Esophagus squamous epithelium (tissue), 5 donors: ENCODE measurements at regions of chr13 and their contacts with region 1.

Region 1: DNA sequence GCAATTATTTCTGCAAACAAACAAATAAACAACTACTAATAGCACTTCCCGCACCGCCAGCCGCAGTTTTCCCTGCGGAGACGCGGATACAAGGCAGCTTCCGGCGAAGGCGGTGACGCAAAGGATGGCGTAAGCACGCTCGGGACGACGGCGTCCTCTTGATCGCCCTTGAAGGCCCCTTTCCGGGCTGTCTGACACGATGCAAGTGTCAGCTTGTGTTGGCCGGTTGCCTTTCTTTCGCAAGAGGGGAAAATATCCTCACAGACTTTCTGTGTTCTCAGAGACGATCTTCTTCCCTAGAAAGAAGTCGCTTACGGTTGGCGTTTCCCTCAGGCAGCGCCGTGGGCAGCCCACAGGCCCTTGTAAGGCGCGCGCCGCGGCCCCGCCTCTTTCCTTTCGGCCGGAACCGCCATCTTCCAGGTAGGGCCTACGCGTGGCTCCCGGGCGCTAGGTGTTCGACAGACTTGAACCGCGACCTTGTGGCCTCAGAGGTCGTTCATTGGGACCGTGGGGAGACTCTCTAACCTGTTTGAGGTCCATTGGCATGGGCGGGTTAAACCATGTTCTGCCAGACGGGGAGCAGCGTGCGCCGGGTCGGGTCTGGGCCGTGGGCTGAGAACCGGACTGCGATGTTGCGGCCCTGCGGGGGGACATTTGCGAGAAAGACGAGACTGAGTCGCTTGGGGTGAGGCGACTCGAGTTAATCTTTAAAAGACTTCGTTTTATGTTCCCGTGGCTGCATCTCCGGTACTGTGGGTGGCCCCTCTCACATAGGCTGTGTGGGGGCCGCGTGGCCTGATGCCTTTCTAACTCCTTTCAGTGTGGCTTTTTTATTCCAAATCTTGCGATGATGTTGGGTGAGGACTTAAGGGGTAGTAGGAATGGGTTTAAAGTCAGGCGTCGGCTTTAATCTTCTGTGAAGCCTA is at the start of gene RPL21:
- DNase-seq: peak; percentile 80
- H3K4me3 ChIP-seq: peak within 1 kb of the TSS; percentile 77 to 97 (median 86)
- H3K27ac ChIP-seq: peak within 1 kb of the TSS; percentile 93 to 98 (median 96)
- H3K4me1 ChIP-seq: peaks cover 10 to 56% (median 36%) of the 10 kb centered on the region in 3 donors
- H3K27me3 ChIP-seq: no peaks in the 10 kb centered on the region
- CTCF ChIP-seq: peak in 1 of 6 experiments; percentile 13
- POLR2A ChIP-seq: peak in 3 of 4 donors; percentile 70 to 92 (median 72)
- total RNA-seq, gene RPL21: 398 to 1,284 (median 964) TPM

Region 2: DNA sequence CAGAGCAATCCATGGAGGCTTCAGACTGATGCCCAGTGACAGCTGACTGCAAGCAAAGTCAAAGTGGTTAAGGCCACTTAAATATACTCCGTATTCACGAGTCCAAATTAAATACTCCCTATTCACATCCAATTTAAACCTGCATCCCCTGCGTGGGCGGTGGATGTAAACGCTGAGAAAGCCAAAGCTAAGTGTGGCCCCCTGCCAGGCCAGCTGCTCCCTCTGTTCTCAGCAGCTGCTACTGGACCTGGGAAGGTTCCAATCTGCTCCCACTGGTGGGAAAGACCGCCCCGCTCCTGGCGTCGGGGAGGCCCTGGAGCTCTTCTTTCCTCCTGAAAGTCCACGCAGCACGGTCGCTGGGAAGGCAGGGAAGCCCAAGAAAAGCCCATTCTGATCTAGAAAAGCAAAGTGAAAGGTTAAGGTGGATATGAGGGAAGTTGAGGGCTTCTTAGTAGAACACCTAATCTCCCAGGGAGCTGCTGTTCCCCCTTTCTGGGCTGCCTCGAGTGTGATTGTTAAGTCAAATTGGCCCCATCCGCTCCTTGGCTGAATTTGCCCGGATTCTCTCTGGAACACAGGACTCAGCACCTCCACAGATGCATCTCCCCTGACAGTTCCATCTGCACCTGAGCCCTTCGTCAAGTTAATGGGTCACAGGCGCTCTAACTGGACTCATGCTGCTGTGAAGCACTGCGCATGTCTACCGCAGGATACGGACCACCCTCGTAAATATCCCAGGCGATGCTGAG is 285.3 kb before region 1 on chr13:
- intact Hi-C with region 1: no loop called
- DNase-seq: no peak
- H3K4me3 ChIP-seq: no peak overlapping the region
- H3K27ac ChIP-seq: no peak overlapping the region
- H3K4me1 ChIP-seq: peaks cover 0 to 22% (median 4%) of the 10 kb centered on the region in 3 donors
- H3K27me3 ChIP-seq: peaks cover 0 to 33% (median 0%) of the 10 kb centered on the region in 4 donors
- CTCF ChIP-seq: no peak
- POLR2A ChIP-seq: no peak

Region 3: GRCh38 chr13:27171827-27172494 is 79.5 kb before region 1 on chr13:
- intact Hi-C with region 1: loop called (anchors 10 kb)
- DNase-seq: peak; percentile 36
- H3K4me3 ChIP-seq: peak overlapping the region; percentile 44 to 97 (median 79)
- H3K27ac ChIP-seq: peak overlapping the region; percentile 94 to 98 (median 96)
- H3K4me1 ChIP-seq: peaks cover 22 to 62% (median 25%) of the 10 kb centered on the region in 3 donors
- H3K27me3 ChIP-seq: no peaks in the 10 kb centered on the region
- CTCF ChIP-seq: peak in 3 of 6 experiments; percentile 6 to 17 (median 15)
- POLR2A ChIP-seq: peak in 1 of 4 donors; percentile 10